A673 (cell line): ENCODE measurements at regions of chr12 and their contacts with region 1.

Region 1: GRCh38 chr12:121516437-121517011 is 64.3 kb downstream of the KDM2B start:
- DNase-seq: no peak
- H3K4me3 ChIP-seq: no peak overlapping the region
- H3K27ac ChIP-seq: no peak overlapping the region
- H3K4me1 ChIP-seq: no peaks in the 10 kb centered on the region
- H3K27me3 ChIP-seq: no peaks in the 10 kb centered on the region
- CTCF ChIP-seq: no peak

Region 2: GRCh38 chr12:121175383-121176227 is 340.9 kb before region 1 on chr12:
- CTCF ChIA-PET with region 1: no interaction called
- POLR2A ChIA-PET with region 1: interaction called, 13 read pairs
- intact Hi-C with region 1: no loop called
- DNase-seq: no peak
- H3K4me3 ChIP-seq: no peak overlapping the region
- H3K27ac ChIP-seq: no peak overlapping the region
- H3K4me1 ChIP-seq: no peaks in the 10 kb centered on the region
- H3K27me3 ChIP-seq: no peaks in the 10 kb centered on the region
- CTCF ChIP-seq: no peak

Region 3: DNA sequence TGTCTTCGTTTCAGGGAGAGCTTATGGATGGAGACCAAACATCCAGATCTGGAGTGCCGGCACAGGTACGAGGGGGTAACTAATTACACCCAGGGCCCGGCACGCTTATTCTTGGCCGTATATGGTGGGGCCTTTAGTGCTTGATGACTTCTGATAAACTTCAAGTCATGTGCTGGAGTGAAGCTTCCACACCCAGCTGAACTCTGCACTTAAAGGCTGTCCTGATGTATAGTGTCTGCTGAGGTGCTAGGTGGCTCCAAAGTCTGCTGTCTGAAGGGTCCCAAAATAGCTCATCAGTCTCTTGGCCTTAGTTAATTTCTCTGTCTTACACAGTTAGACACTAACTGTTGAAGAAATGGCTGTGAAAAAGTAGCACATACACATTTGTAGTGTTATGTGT is 98.7 kb before region 1 on chr12:
- CTCF ChIA-PET with region 1: no interaction called
- POLR2A ChIA-PET with region 1: no interaction called
- intact Hi-C with region 1: no loop called
- DNase-seq: no peak
- H3K4me3 ChIP-seq: no peak overlapping the region
- H3K27ac ChIP-seq: no peak overlapping the region
- H3K4me1 ChIP-seq: no peaks in the 10 kb centered on the region
- H3K27me3 ChIP-seq: no peaks in the 10 kb centered on the region
- CTCF ChIP-seq: no peak

Region 4: DNA sequence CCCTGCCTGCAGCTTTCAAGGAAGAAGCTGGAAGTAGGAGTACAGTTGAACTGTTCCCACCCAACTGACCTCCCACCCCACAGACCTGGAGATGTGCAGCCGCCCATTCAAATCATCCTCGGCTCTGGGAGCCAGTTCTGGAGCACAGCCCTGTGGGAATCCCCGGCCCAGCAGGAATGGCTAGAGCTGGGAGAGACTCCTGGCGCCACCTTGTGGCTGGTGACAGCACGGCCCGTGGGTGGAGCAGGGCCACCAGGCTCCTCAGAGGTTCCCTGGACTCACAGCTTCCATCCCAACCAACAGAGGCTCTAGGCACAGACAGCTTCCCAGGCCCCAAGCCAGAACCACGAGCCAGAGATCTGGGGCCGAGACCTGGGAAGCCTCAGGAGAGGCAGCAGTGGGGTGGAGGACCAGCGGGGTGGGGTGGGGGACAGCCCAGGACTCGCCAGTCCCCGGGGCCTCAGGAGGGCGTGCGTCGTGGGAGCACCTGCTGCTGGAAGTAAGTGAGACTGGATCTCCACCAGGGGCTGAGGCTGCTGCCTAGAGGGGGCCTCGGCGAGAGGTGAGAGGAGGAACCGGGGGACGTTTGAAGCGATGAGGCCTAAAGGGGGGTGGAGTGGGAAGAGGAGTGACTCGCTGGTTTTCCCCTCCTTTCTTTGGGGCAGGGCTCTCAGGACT is 73.2 kb before region 1 on chr12:
- CTCF ChIA-PET with region 1: no interaction called
- POLR2A ChIA-PET with region 1: no interaction called
- intact Hi-C with region 1: no loop called
- DNase-seq: peak; percentile 81
- H3K4me3 ChIP-seq: no peak overlapping the region
- H3K27ac ChIP-seq: no peak overlapping the region
- H3K4me1 ChIP-seq: no peaks in the 10 kb centered on the region
- H3K27me3 ChIP-seq: no peaks in the 10 kb centered on the region
- CTCF ChIP-seq: peak; percentile 94

Region 5: DNA sequence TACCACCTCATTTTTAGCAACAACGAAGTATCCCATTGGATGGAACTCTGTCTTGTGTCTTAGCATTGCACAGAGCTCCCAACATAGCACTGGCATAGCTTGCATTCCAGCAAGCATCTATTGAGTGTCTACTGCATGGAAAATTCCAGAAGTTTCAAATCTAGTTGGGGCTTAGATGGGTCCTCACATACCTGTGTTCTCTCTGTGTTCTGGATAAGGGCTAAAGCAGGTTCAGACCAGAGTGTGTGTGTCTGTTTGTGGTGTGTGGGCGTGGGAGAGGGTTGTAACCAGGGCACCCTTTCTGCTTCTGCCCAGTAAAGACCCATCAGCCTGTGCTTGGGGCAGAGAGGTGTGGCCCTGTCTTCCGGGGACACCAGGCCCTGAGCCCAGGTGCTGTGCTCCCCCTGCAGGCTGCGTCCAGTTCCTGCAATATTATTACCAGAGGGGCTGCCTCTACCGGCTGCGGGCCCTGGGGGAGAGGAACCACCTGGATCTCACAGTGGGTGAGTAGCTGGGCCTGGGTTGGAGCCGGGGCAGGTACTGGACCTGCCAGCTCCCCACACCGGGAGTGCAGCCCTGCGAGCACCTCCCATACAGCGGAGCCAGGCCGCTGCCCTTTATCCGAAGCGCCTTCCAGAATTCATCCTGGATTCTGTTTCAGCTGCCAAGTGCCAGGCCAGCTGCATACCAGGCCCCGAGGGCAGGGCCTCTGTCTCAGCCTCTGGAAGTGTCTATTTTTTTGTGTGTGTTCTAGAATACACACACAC is 256.7 kb after region 1 on chr12:
- CTCF ChIA-PET with region 1: no interaction called
- POLR2A ChIA-PET with region 1: no interaction called
- intact Hi-C with region 1: no loop called
- DNase-seq: peak; percentile 70
- H3K4me3 ChIP-seq: no peak overlapping the region
- H3K27ac ChIP-seq: no peak overlapping the region
- H3K4me1 ChIP-seq: no peaks in the 10 kb centered on the region
- H3K27me3 ChIP-seq: no peaks in the 10 kb centered on the region
- CTCF ChIP-seq: peak; percentile 88